ENCODE measurements at regions of chr22 and their contacts with region 1.

Region 1: DNA sequence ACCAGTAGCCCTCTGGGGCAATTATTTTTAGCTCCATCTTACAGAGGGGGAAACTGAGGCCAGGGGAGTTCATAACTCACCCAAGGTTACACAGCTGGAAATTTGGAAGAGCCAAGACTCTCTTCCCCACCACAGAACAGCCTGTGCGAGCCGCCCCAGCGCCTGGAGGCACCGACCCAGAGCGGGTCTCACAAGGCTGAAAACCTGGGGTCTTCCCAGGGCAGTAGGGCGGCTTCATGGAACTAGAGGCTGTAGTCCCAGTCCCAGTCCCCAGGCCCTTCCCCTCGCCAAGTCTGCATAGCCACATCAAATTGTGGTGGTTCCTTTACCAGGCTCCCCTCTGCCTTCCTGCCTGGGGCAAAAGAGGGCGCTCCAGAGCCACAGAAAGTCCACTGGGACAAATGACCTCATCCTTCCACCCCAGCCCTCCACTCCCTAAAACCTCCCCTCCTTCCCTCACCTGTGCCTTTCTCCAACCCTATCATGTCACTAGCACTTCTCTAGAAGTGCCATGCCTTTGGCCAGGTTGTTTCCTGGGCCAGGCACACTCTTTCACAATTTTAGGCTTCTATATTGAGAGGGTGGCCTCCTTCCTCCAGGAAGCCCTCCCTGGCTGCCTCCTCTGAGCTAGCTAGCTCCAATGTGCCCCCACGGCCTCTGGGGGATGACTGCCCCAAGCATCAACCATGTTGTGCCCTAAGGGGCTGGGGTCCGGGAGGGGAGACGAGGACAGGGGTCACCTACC is 15.2 kb upstream of the CDC42EP1 start:
- H3K4me3 ChIP-seq: no peak overlapping the region
- H3K27ac ChIP-seq: no peak overlapping the region
- H3K4me1 ChIP-seq: peaks cover 6% of the 10 kb centered on the region
- CTCF ChIP-seq: peak; percentile 85

Region 2: DNA sequence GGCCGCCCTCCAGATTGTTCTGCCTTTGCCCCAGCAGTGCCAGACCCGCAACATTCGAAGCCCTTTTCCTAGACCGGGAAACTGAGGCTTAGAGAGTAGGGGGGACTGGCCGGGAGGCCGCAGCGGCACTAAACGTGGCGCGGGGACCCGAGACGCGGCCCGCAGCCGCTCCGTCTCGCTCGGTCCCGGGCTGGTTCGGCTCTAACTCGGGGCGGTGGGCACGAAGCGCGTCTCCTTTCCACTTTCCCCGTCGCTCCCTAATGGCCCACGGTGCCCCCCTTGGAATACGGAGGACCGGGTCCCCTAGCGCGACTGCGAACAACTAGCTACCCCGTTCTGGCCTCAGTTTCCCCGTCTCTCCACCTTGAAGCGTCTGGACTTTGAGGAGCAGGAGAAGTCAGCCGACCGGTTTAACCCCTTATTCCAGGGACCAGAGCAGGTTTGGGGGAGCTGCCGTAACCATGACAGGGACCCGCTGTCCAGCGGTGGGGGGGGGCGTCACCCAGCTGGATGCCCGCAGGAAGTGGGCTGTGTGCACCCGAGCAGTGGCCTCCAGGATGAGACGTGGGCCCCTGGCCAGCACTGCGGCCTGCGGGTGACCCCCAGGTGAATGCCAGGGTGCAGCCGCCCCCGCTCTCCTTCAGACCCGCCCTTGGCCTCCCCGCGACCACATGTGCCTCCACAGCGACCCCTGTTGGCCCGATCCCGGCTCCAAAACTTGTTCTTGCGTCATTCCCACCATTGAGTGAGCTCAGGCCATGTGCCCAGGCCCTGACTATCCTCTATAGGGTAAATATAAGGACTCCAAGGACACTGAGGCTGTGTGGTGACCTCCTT is 16.3 kb after region 1 on chr22:
- CTCF ChIA-PET with region 1: interaction called, 608 read pairs
- POLR2A ChIA-PET with region 1: interaction called, 8 read pairs
- H3K4me3 ChIP-seq: peak overlapping the region; percentile 69
- H3K27ac ChIP-seq: peak overlapping the region; percentile 96
- H3K4me1 ChIP-seq: peaks cover 12% of the 10 kb centered on the region
- CTCF ChIP-seq: peak; percentile 94

Region 3: GRCh38 chr22:37581504-37581903 is 36.4 kb after region 1 on chr22:
- CTCF ChIA-PET with region 1: interaction called, 10 read pairs
- POLR2A ChIA-PET with region 1: no interaction called
- H3K4me3 ChIP-seq: no peak overlapping the region
- H3K27ac ChIP-seq: no peak overlapping the region
- H3K4me1 ChIP-seq: 0 out of 2 replicates have a peak, but pooled peaks cover 3% of the 10 kb centered on the region
- CTCF ChIP-seq: no peak

Measured in HEK293 (cell line).